ENCODE measurements at regions of chr16 and their contacts with region 1.

Region 1: GRCh38 chr16:50335196-50335958 is 33.4 kb downstream of the BRD7 start:
- DNase-seq: no peak
- ATAC-seq: no peak
- H3K4me3 ChIP-seq: no peak overlapping the region
- H3K27ac ChIP-seq: no peak overlapping the region
- H3K4me1 ChIP-seq: no peaks in the 10 kb centered on the region
- H3K27me3 ChIP-seq: no peaks in the 10 kb centered on the region

Region 2: DNA sequence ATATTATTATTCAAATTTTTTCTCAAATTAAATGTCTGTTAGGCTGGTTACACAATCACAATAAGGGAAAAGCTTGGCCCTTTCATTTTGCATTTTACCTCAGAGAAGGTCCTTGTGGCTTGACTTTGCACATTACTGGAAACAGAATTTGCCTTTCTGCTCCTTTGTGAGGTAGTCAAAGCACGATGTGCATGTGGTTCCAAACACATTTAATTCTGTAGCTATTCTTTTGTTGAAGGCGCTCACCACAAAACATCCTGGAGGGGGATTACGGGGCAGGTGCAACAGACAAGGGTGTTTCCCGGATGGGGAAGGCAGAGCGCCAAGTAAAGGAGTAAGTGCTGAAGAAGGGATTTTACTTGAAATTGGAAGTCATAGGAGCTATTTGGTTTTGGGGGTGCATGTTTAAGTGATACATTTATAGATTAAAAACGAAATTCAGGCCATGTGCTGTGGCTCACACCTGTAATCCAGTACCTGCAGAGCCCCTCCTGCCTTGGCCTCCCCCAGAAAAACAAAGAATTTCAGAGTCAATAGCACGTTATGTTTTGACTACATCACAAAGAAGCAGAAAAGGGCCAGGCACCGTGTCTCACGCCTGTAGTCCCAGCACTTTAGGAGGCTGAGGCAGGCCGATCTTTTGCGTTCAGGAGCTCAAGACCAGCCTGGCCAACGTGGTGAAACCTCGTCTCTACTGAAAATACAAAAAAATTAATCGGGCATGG is 213.5 kb before region 1 on chr16:
- intact Hi-C with region 1: no loop called
- DNase-seq: no peak
- ATAC-seq: no peak
- H3K4me3 ChIP-seq: no peak overlapping the region
- H3K27ac ChIP-seq: no peak overlapping the region
- H3K4me1 ChIP-seq: no peaks in the 10 kb centered on the region
- H3K27me3 ChIP-seq: no peaks in the 10 kb centered on the region

Region 3: GRCh38 chr16:50228364-50228868 is 107.0 kb before region 1 on chr16:
- intact Hi-C with region 1: loop called in 1 of 4 experiments (anchors 10 kb)
- DNase-seq: no peak
- ATAC-seq: no peak
- H3K4me3 ChIP-seq: no peak overlapping the region
- H3K27ac ChIP-seq: no peak overlapping the region
- H3K4me1 ChIP-seq: no peaks in the 10 kb centered on the region
- H3K27me3 ChIP-seq: no peaks in the 10 kb centered on the region

Region 4: DNA sequence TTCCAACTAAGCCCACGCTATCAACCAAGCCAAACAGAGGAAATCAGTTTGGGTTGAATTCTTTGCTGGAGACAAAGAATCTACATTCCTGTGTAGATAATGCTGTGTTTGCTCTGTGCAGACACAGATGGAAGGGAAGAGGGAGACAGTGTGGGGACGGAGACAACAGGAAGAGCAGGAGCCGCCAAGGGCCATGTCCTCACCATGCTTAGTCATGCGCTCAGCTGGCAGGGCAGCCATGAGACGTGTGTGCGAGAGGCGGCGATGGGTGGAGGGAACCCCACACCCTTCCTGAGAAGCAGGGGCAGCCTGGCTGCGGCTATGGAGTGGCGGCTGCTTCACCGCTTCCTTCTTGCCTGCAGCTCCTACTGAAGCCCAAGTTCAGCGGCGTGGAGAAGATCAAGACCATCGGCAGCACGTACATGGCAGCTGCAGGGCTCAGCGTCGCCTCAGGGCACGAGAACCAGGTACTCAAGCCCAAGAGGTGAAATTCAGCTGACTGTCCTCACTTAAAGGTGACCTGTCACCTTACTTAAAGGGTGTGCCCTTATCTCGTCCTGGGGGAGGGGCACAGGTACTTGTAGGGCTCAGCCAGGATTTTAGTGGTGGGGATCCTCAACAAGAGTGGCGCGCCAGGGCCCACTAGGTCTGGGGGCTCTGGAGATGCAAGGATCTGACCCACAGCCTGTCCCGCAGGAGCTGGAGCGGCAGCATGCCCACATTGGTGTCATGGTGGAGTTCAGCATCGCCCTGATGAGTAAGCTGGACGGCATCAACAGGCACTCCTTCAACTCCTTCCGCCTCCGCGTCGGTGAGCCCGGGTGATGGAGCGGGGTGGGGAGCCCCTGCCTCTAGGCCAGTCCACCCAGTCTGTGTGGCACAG is 21.5 kb before region 1 on chr16:
- intact Hi-C with region 1: no loop called
- DNase-seq: peak; percentile 82 to 91 (median 91)
- ATAC-seq: peak; percentile 79 to 91
- H3K4me3 ChIP-seq: no peak overlapping the region
- H3K27ac ChIP-seq: no peak overlapping the region
- H3K4me1 ChIP-seq: no peaks in the 10 kb centered on the region
- H3K27me3 ChIP-seq: no peaks in the 10 kb centered on the region

Measured in right cardiac atrium (tissue), 5 donors.